Ascending aorta (tissue), 2 donors: ENCODE measurements at regions of chr17 and their contacts with region 1.

Region 1: GRCh38 chr17:700504-701094 is 14.0 kb downstream of the VPS53 start:
- DNase-seq: no peak
- H3K4me3 ChIP-seq: no peak overlapping the region
- H3K27ac ChIP-seq: no peak overlapping the region
- H3K4me1 ChIP-seq: no peaks in the 10 kb centered on the region
- H3K27me3 ChIP-seq: no peaks in the 10 kb centered on the region
- CTCF ChIP-seq: peak; percentile 63 to 66 (median 65)

Region 2: DNA sequence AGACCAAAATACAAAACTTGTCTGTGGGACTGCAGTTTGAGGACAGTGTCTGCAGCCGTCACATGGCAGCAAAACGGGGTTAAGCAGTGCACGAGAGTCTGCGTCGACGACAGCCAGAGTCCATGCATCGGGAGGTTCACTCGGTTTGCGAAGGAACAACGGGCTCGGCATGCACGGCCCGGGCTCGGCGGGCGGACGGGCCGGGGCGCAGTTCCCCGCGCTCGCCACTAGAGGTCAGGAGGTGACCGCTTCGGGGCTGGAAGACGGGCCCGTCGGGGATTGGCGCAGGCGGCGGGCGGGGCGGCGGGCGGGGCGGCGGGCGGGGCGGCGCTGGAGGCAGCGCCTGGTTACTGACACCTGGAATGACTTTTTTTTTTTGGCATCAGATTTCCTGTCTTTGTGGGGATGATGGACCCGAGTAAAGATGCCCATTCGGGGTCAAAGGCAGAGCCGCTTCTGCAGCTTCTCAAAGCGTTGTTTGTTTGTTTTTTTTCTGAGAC is 556.8 kb before region 1 on chr17:
- intact Hi-C with region 1: loop called (anchors 2 kb)
- DNase-seq: peak in 1 of 2 donors; percentile 82
- H3K4me3 ChIP-seq: no peak overlapping the region
- H3K27ac ChIP-seq: no peak overlapping the region
- H3K4me1 ChIP-seq: no peaks in the 10 kb centered on the region
- H3K27me3 ChIP-seq: no peaks in the 10 kb centered on the region
- CTCF ChIP-seq: peak; percentile 84 to 90 (median 84)

Region 3: DNA sequence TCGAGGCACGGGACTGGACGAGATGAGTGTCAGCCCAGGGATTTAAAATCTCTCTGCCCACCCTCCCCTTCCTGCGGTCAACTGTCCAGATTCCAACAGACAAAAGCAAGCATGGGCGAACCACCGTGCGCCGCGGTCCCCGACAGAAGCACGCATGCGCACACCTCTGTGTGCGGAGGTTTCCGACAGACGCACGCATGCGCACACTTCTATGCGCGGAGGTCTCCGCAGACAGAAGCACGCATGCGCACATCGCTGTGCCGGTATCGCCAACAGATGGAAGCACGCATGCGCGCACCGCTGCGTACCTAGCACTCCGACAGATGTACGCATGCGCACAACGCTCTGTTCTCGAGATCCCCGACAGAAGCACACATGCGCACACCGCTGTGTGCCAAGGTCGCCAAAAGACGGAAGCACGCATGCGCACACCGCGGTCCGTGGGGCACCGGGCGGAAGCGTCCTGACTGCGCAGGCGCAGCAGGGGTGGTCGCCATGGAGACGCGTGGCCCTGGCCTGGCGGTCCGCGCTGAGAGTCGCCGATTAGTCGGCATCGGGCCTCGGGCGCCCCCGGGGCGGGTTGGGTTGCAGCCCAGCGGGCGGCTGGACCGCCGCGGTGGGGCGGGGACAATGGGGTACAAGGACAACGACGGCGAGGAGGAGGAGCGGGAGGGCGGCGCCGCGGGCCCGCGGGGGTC is 290.6 kb before region 1 on chr17:
- intact Hi-C with region 1: loop called (anchors 2 kb)
- DNase-seq: peak; percentile 98 to 100
- H3K4me3 ChIP-seq: peak overlapping the region; percentile 87 to 89
- H3K27ac ChIP-seq: peak overlapping the region; percentile 51 to 63
- H3K4me1 ChIP-seq: peaks cover 3 to 9% of the 10 kb centered on the region in 2 donors
- H3K27me3 ChIP-seq: no peaks in the 10 kb centered on the region
- CTCF ChIP-seq: no peak